ENCODE measurements at regions of chr15 and their contacts with region 1.

Region 1: GRCh38 chr15:43440721-43441281 is 52.2 kb downstream of the TP53BP1 start:
- DNase-seq: peak; percentile 61
- H3K4me3 Mint-ChIP-seq: peak overlapping the region; percentile 36
- H3K27ac Mint-ChIP-seq: peak overlapping the region; percentile 87
- H3K4me1 Mint-ChIP-seq: peaks cover 11% of the 10 kb centered on the region
- H3K27me3 Mint-ChIP-seq: no peaks in the 10 kb centered on the region

Region 2: GRCh38 chr15:43165801-43166325 is 274.9 kb before region 1 on chr15:
- CTCF ChIA-PET with region 1: no interaction called
- POLR2A ChIA-PET with region 1: no interaction called
- intact Hi-C with region 1: no loop called
- DNase-seq: no peak
- H3K4me3 Mint-ChIP-seq: no peak overlapping the region
- H3K27ac Mint-ChIP-seq: no peak overlapping the region
- H3K4me1 Mint-ChIP-seq: peaks cover 6% of the 10 kb centered on the region
- H3K27me3 Mint-ChIP-seq: no peaks in the 10 kb centered on the region

Region 3: GRCh38 chr15:43285609-43286037 is 155.2 kb before region 1 on chr15:
- CTCF ChIA-PET with region 1: no interaction called
- POLR2A ChIA-PET with region 1: no interaction called
- intact Hi-C with region 1: no loop called
- DNase-seq: peak; percentile 62
- H3K4me3 Mint-ChIP-seq: no peak overlapping the region
- H3K27ac Mint-ChIP-seq: no peak overlapping the region
- H3K4me1 Mint-ChIP-seq: peaks cover 2% of the 10 kb centered on the region
- H3K27me3 Mint-ChIP-seq: peaks cover 7% of the 10 kb centered on the region

Region 4: GRCh38 chr15:43492673-43493601 is 52.1 kb after region 1 on chr15 and contains the start of gene TP53BP1:
- CTCF ChIA-PET with region 1: interaction called, 13 read pairs
- POLR2A ChIA-PET with region 1: no interaction called
- intact Hi-C with region 1: loop called (anchors 5 kb)
- DNase-seq: peak; percentile 97
- H3K4me3 Mint-ChIP-seq: peak within 1 kb of the TSS; percentile 87
- H3K27ac Mint-ChIP-seq: peak within 1 kb of the TSS; percentile 88
- H3K4me1 Mint-ChIP-seq: peaks cover 25% of the 10 kb centered on the region
- H3K27me3 Mint-ChIP-seq: no peaks in the 10 kb centered on the region
- total RNA-seq, gene TP53BP1: 26.4 to 32.0 TPM

Measured in activated CD4-positive, alpha-beta memory T cell treated with anti-CD3 and anti-CD28 coated beads for 36 hours (primary cell).